ENCODE measurements at regions of chr3 and their contacts with region 1.

Region 1: DNA sequence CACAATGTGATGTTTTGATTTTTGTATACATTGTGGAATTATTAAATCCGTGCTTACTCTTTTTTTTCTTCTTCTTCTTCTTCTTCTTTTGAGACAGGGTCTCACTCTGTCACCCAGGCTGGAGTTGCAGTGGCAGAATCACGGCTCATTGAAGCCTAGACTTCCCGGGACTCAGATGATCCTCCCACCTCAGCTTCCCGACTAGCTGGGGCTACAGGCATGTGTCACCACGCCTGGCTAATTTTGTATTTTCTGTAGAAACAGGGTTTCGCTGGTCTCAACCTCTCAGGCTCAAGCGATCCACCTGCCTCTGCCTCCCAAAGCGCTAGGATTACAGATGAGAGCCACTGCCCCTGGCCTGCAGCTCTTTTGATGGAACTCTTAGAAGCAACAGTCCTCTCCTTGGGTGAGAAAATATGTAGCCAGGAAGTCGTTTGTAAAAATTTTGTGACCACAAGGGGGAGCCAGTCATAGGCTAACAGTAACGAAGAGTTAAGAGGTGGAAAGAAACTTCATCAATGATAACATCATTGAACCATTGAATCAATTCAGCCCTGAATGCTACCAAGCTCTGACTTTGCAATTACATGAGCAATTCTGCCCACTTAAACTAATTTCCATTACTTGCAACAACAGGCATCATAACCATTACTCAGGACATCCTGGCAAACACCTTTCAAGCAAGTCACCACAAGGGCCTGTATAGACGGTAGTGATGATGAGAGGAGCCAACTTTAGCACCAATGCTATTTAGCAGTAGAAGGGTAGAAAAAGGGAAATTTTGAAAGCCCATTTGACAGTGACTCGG is 16.7 kb upstream of the CMTM7 start:
- DNase-seq: peak; percentile 62
- H3K4me3 Mint-ChIP-seq: no peak overlapping the region
- H3K27ac Mint-ChIP-seq: peak overlapping the region; percentile 44
- H3K4me1 Mint-ChIP-seq: peaks cover 27% of the 10 kb centered on the region
- H3K27me3 Mint-ChIP-seq: peaks cover 4% of the 10 kb centered on the region

Region 2: DNA sequence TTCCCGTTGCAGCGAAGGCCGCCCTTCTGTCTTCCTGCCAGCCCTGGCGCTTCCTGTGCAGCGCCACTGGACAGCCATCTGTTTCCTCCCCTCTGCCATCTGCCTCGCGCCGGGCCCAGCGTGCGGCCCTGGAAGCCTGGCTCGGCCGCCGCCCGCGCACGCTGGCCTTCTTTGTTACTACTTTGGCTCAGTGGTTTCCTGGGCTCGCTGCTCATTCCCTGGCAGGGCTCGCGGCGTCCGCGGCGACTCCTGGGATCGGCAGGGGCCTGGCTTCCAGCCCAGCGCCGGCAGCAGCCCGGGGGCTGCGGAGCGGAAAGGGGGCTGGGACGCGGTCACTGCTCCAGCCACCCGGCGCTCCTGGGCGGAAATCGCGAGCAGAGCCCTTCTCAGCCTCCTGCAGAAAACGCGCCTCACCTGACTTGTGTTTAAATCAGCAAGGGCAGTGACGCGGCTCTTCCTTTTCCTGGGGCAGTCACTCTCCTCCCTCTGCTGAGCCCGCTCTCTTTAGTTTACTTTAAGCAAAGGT is 26.6 kb after region 1 on chr3:
- intact Hi-C with region 1: loop called (anchors 1 kb)
- DNase-seq: peak; percentile 51
- H3K4me3 Mint-ChIP-seq: peak overlapping the region; percentile 89
- H3K27ac Mint-ChIP-seq: peak overlapping the region; percentile 98
- H3K4me1 Mint-ChIP-seq: peaks cover 53% of the 10 kb centered on the region
- H3K27me3 Mint-ChIP-seq: no peaks in the 10 kb centered on the region

Region 3: GRCh38 chr3:32467333-32468070 is 92.5 kb after region 1 on chr3:
- intact Hi-C with region 1: loop called (anchors 1 kb)
- DNase-seq: peak; percentile 59
- H3K4me3 Mint-ChIP-seq: no peak overlapping the region
- H3K27ac Mint-ChIP-seq: no peak overlapping the region
- H3K4me1 Mint-ChIP-seq: peaks cover 29% of the 10 kb centered on the region
- H3K27me3 Mint-ChIP-seq: no peaks in the 10 kb centered on the region